ENCODE measurements at regions of chr4 and their contacts with region 1.

Region 1: DNA sequence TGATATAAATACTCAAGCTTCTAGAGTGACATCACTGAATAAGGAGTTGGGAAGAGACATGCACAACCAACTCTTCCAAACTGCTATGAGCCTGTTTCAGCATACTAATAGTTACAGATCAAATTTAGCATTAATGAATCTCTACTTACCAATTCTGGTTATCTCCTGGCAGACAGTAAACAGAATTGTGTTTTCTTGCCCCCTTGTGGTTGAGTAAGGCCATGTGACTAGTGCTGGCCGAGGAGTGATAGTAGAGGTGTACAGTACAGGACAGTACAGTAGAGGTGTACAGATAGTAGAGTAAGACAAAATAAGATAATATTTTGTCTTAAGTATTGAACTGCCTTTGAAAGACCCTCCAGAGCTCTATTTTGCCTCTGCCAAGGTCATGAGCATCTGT is 681.4 kb downstream of the GABRG1 start:
- DNase-seq: no peak
- ATAC-seq: peak; percentile 46 to 59

Region 2: GRCh38 chr4:44927399-44928380 is 514.8 kb before region 1 on chr4:
- intact Hi-C with region 1: loop called (anchors 5 to 10 kb)
- DNase-seq: no peak
- ATAC-seq: no peak

Region 3: DNA sequence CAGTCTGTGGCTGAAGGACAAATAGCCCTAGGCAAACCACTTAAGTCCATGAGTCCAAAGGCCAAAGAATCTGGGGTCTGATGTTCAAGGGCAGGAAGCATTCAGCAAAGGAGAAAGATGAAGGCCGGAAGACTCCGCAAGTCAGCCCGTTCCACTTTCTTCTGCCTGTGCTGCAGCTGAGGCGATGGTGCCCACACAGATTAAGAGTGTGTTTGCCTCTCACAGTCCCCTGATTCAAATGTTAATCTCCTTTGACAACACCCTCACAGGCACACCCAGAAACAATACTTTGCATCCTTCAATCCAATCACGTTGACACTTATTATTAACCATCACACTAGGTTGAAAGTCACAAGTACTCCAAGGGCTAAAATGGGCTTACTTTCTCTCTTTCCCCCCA is 110.7 kb before region 1 on chr4:
- intact Hi-C with region 1: no loop called
- DNase-seq: no peak
- ATAC-seq: no peak

Region 4: DNA sequence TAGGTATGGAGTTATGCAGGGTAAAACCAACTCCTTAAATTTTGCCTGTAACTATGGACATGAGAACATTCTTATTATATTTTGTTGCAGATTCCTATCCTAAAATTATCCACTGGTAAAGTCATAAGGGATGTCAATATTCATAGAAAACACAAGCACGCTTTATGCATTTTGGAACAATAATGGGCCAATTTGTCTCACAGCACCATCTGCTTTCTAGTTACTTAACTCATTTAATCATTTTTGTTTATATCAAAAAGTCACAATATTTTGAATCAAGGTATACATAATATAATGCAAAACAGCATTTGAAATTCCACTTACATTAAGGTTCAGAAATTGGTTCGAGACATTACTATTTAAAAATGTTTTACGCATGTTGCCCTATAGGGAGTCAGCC is 478.4 kb after region 1 on chr4:
- intact Hi-C with region 1: no loop called
- DNase-seq: no peak
- ATAC-seq: no peak

Measured in left cardiac atrium (tissue), 4 donors.